ENCODE measurements at regions of chr4 and their contacts with region 1.

Region 1: DNA sequence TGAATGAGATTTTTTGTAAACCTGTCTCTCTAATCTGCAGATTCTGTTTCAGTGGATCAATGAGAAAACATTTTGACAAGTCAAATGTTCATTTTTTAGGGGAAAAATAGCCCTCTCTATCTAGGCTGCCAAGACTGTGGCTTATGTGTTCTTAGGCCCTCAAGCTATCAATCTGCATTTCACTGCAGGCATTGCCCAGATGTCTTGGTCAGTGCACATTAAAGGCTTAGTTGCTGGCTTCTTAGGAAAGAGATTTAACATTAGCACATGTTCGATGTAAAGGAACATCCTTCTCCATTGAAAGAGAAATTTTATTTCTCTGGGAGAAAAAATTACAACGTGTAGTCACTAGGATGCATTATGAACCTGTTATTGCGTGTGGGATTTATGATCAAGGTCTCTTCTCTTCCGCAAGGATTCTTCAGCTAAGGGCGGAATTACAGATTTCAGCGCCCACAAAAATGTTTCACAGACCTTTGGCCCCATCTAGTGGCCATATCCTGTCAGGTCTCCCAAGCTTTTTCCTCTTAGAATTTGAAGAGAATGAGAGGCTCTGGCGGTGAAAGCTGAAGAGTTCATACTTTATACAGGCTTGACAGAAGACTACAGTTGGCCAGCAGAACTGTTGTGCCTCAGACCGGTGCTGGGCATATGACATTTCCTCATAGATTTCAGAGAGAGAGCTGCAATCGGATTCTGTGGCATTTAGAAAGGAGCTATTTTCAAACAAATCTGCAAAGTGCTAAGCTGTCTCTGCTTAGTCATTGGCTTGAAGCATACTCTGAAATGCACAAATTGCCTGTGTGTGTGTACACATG is 144.6 kb upstream of the NOCT start:
- DNase-seq: peak in 4 of 6 donors; percentile 29 to 74 (median 34)
- ATAC-seq: peak; percentile 67 to 96 (median 95)
- H3K4me3 ChIP-seq: no peak overlapping the region
- H3K27ac ChIP-seq: no peak overlapping the region
- H3K4me1 ChIP-seq: no peaks in the 10 kb centered on the region
- H3K27me3 ChIP-seq: no peaks in the 10 kb centered on the region
- CTCF ChIP-seq: peak; percentile 65 to 84 (median 80)

Region 2: DNA sequence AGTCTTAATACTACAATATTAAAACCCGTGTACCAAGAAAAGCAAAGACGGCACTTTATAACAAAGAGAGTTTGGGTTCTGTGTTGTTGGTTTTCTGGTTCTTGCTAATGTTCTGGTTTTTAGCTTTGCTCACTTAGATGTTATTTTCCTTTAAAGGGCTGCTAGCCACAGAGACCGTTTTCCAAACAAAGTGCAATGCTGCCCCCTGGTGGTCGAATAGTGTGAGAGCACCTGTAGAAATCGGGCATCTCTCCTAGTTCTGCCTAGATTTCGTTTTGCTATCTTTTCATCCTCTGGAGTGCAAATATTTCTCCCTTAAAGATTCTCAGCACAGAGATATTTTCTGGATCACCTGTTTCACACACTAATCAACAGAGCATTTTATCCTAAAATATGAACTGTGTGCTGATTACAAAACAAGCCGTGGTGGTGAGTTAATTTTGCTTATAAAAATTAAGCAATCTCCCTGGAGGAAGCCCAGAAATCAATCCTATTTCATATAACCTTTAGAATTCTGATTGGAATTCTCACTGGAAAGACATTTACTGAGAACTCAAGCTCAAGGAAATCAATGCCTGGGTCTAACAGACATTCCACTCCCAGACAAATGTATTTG is 189.8 kb before region 1 on chr4:
- intact Hi-C with region 1: loop called in 1 of 3 experiments (anchors 10 kb)
- DNase-seq: peak; percentile 56 to 89 (median 80)
- ATAC-seq: peak; percentile 67 to 94 (median 89)
- H3K4me3 ChIP-seq: no peak overlapping the region
- H3K27ac ChIP-seq: no peak overlapping the region
- H3K4me1 ChIP-seq: no peaks in the 10 kb centered on the region
- H3K27me3 ChIP-seq: no peaks in the 10 kb centered on the region
- CTCF ChIP-seq: peak; percentile 89 to 97 (median 92)

Measured in pancreas (tissue), 10 donors.